WTC11 (cell line): ENCODE measurements at regions of chr1 and their contacts with region 1.

Region 1: GRCh38 chr1:206094024-206094423 is 23.2 kb downstream of the AVPR1B start:
- DNase-seq: no peak
- ATAC-seq: no peak
- H3K4me3 Mint-ChIP-seq: no peak overlapping the region
- H3K27ac Mint-ChIP-seq: no peak overlapping the region
- H3K4me1 Mint-ChIP-seq: no peaks in the 10 kb centered on the region
- H3K27me3 Mint-ChIP-seq: no peaks in the 10 kb centered on the region
- CTCF ChIP-seq: no peak

Region 2: GRCh38 chr1:205965036-205965884 is 128.8 kb before region 1 on chr1:
- CTCF ChIA-PET with region 1: no interaction called
- POLR2A ChIA-PET with region 1: no interaction called
- DNase-seq: no peak
- ATAC-seq: no peak; the same call in 1 of the 2 replicates
- H3K4me3 Mint-ChIP-seq: no peak overlapping the region
- H3K27ac Mint-ChIP-seq: no peak overlapping the region
- H3K4me1 Mint-ChIP-seq: peaks cover 9% of the 10 kb centered on the region
- H3K27me3 Mint-ChIP-seq: no peaks in the 10 kb centered on the region; the same call in 1 of the 2 replicates
- CTCF ChIP-seq: no peak

Region 3: DNA sequence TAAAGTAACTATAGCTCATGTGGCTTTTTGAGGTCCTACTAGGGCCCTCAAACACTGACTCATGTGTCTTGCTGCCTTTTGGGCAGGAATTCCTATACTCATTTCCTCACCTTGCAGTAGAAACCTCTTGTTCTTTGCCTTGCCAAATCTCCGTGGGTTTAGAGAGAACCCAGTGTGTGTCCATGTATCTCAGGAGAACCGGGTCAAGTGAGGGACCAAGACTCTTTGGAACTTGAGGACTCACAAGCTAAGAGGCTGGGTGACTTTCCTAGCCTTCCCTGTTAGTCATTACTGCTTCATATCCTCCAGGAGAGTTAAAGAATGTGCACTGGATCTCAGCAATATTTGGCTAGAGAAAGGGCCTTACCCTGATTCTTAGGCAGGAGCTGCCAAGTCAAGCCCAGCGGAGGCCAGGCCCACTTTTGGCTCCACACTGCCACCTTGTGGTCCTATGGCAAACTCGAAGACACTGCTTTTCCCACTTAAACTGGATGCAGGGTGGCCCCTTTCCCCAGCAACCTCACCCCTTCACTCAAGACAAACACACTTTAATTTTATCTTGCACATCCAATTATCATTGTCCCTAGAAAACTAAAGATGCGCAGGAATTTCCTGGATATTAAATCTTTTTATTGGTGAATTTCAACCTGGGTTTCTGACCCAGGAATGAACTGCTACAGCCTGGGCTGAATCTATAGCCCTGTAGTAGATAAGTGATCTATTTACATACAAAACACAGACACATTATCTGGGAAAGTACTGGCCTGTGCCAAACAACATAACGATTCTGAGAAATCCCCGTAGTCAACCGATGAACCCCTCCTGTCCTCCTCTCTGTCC is 12.5 kb after region 1 on chr1:
- CTCF ChIA-PET with region 1: interaction called, 12 read pairs
- POLR2A ChIA-PET with region 1: no interaction called
- DNase-seq: peak; percentile 86
- ATAC-seq: peak; percentile 95
- H3K4me3 Mint-ChIP-seq: no peak overlapping the region
- H3K27ac Mint-ChIP-seq: no peak overlapping the region
- H3K4me1 Mint-ChIP-seq: no peaks in the 10 kb centered on the region
- H3K27me3 Mint-ChIP-seq: no peaks in the 10 kb centered on the region
- CTCF ChIP-seq: peak; percentile 78